Activated CD4-positive, alpha-beta T cell treated with anti-CD3 and anti-CD28 coated beads for 36 hours (primary cell): ENCODE measurements at regions of chr11 and their contacts with region 1.

Region 1: DNA sequence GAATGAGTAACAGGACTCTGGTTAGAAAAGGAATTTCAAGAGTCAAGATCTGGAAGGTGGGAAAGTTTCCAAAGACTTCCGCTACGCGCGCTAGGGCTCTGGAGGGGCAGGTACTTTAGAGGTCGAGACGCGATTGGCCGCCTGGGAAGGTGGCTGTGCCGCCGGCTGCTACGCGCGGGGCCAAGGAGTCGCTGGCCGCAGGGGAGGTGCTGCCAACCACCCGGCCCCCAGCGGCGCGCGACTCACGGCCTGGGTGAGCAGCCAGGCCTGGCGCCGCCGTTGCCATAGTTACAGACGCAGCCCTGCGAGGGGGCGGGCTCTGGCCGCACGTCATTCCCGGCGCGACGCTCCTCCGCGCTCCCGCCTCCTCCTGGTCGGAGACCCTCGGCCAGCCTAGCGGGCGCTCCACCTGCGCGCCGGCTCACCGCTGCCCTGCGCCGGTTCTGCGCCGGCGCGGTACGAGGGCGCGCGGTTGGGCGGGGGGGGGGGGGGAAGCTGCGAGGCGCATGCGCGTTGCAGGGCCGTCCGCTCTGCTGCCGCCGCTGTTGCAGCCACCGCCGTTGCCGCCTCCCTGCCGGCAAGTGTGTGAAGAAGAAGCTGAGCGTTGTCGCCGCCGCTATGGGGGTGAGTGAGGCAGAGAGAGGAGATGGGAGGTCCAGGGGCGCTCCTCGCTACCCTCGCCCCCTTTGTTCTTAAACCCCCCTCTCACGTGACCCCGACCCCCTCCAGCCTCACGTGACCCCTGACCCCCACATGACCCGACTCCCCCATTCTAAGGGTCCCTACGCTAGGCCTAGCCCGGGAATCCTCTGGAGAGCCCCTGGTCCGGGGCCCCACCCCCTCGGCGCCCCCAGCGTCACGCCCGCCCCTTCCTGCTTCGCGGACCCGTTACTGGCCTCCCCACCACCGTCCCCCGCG is at the start of gene NAA40:
- DNase-seq: peak; percentile 97
- ATAC-seq: peak; percentile 93
- H3K4me3 Mint-ChIP-seq: peak within 1 kb of the TSS; percentile 83
- H3K27ac Mint-ChIP-seq: peak within 1 kb of the TSS; percentile 87
- H3K4me1 Mint-ChIP-seq: peaks cover 16% of the 10 kb centered on the region
- H3K27me3 Mint-ChIP-seq: no peaks in the 10 kb centered on the region
- total RNA-seq, gene NAA40: 13.7 to 15.9 TPM

Region 2: GRCh38 chr11:63768237-63769043 is 170.3 kb before region 1 on chr11 and contains the start of gene ZFTA:
- CTCF ChIA-PET with region 1: interaction called, 3 read pairs
- POLR2A ChIA-PET with region 1: no interaction called
- intact Hi-C with region 1: loop called (anchors 2 to 5 kb)
- DNase-seq: peak; percentile 77
- ATAC-seq: peak; percentile 58
- H3K4me3 Mint-ChIP-seq: peak within 1 kb of the TSS; percentile 96
- H3K27ac Mint-ChIP-seq: peak within 1 kb of the TSS; percentile 78
- H3K4me1 Mint-ChIP-seq: peaks cover 6% of the 10 kb centered on the region
- H3K27me3 Mint-ChIP-seq: peaks cover 20% of the 10 kb centered on the region
- total RNA-seq, gene ZFTA: 1.5 to 1.7 TPM

Region 3: DNA sequence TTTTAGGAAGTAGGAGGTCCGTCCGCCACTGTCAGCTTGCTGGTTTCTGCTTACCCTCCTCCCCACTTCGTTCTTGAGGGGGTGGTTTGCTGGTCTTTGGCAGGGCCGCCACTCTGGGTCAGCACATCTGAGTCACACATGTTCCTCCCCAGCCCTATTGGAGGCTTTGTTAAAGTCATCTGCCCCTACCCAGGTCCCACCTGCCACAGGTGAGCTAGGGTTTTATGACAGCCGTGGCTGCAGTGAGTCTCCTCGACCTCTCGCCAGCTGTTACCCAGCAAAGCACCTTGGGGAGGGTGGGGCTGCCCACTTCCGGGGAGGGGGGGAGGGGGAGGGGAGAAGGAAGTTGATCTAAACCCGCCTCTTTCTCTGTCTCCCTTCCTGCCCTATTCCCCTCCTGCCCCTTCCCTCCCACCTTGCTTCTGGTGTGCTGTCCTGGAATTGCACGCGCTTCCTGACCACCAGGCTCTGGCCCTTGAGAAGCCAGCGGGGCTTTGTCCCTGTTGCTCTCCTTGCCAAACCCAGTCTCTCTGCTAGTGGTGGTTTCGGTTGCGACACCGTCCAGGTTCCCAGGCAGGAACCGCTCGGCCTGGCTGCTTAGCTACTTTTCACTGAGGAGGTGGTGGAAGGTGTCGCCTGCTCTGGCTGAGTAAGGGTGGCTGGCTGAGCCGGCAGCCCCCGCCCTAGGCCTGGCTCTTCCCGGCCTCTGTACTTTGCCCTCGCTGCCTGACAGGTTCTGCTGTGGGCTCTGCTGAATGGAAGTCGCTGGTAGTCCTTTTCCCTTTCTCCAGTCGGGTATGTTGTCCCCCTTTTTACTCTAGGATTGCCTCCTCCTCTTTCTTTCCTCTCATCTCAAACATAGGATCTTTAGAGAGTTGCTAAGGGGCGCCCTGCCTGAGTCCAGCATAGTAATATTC is 50.3 kb before region 1 on chr11:
- CTCF ChIA-PET with region 1: no interaction called
- POLR2A ChIA-PET with region 1: no interaction called
- intact Hi-C with region 1: loop called in 1 of 2 experiments (anchors 1 kb)
- DNase-seq: peak; percentile 83
- ATAC-seq: peak; percentile 88
- H3K4me3 Mint-ChIP-seq: peak overlapping the region; percentile 81
- H3K27ac Mint-ChIP-seq: peak overlapping the region; percentile 92
- H3K4me1 Mint-ChIP-seq: peaks cover 75% of the 10 kb centered on the region
- H3K27me3 Mint-ChIP-seq: no peaks in the 10 kb centered on the region

Region 4: GRCh38 chr11:63974259-63975143 is 35.8 kb after region 1 on chr11 and contains the start of gene COX8A:
- CTCF ChIA-PET with region 1: no interaction called
- POLR2A ChIA-PET with region 1: no interaction called
- intact Hi-C with region 1: loop called (anchors 1 kb)
- DNase-seq: peak; percentile 97
- ATAC-seq: peak; percentile 100
- H3K4me3 Mint-ChIP-seq: peak within 1 kb of the TSS; percentile 95
- H3K27ac Mint-ChIP-seq: peak within 1 kb of the TSS; percentile 97
- H3K4me1 Mint-ChIP-seq: peaks cover 20% of the 10 kb centered on the region
- H3K27me3 Mint-ChIP-seq: no peaks in the 10 kb centered on the region
- total RNA-seq, gene COX8A: 413 to 454 TPM

Region 5: DNA sequence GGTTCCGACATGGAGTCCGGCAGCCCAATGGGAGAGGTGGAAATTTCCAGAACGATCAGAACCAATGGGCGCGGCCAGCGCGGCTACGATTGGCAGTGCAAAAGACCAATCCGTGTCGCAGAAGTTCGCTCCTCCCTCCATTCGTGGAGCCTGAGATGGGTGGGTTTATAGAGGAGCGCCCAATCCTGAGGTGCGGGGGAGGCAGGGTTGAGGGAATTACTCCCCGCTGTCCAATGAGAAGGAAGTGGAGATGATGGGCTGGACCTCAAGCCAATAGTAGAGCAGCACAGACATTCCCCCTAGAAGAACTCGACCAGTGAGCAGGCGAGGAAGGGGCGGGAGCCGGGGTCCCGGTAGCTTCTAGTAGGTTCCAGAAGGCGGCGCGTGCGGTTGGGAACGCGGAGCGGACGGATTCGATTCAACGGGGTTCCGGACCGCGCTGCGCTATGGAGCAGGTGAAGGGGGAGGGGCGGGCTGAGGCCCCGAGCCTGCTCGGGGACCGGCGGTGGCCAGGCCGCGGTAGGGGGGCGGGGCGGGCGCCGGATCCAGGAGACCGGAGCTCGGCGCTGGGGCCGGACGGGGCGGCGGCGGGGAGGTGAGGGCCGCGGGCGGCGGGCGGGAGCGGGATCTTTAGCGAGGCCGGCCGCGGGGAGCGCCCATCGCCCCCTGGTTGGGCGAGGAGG is 247.2 kb after region 1 on chr11 and contains the start of gene STIP1:
- CTCF ChIA-PET with region 1: no interaction called
- POLR2A ChIA-PET with region 1: no interaction called
- intact Hi-C with region 1: loop called in 1 of 2 experiments (anchors 1 kb)
- DNase-seq: peak; percentile 99
- ATAC-seq: peak; percentile 92
- H3K4me3 Mint-ChIP-seq: no peak within 1 kb of the TSS
- H3K27ac Mint-ChIP-seq: peak within 1 kb of the TSS; percentile 92
- H3K4me1 Mint-ChIP-seq: peaks cover 42% of the 10 kb centered on the region
- H3K27me3 Mint-ChIP-seq: no peaks in the 10 kb centered on the region
- total RNA-seq, gene STIP1: 398 to 403 TPM

Region 6: GRCh38 chr11:64284048-64284961 is 345.6 kb after region 1 on chr11 and contains the start of gene BAD:
- CTCF ChIA-PET with region 1: no interaction called
- POLR2A ChIA-PET with region 1: no interaction called
- intact Hi-C with region 1: loop called in 1 of 2 experiments (anchors 1 kb)
- DNase-seq: peak; percentile 97
- ATAC-seq: peak; percentile 88
- H3K4me3 Mint-ChIP-seq: peak within 1 kb of the TSS; percentile 77
- H3K27ac Mint-ChIP-seq: peak within 1 kb of the TSS; percentile 85
- H3K4me1 Mint-ChIP-seq: peaks cover 18% of the 10 kb centered on the region
- H3K27me3 Mint-ChIP-seq: no peaks in the 10 kb centered on the region
- total RNA-seq, gene BAD: 21.3 to 22.9 TPM